Heart right ventricle (tissue), 16 donors: ENCODE measurements at regions of chr11 and their contacts with region 1.

Region 1: GRCh38 chr11:9302448-9302847 is 11.9 kb downstream of the TMEM41B start:
- DNase-seq: no peak
- ATAC-seq: no peak
- H3K4me3 ChIP-seq: no peak overlapping the region
- H3K27ac ChIP-seq: no peak overlapping the region
- H3K4me1 ChIP-seq: peaks cover 0 to 5% (median 0%) of the 10 kb centered on the region in 9 donors
- H3K27me3 ChIP-seq: no peaks in the 10 kb centered on the region
- CTCF ChIP-seq: no peak

Region 2: GRCh38 chr11:9169595-9170295 is 132.7 kb before region 1 on chr11:
- intact Hi-C with region 1: no loop called
- DNase-seq: no peak
- ATAC-seq: no peak
- H3K4me3 ChIP-seq: no peak overlapping the region
- H3K27ac ChIP-seq: no peak overlapping the region
- H3K4me1 ChIP-seq: peaks cover 0 to 20% (median 0%) of the 10 kb centered on the region in 9 donors
- H3K27me3 ChIP-seq: no peaks in the 10 kb centered on the region
- CTCF ChIP-seq: no peak

Region 3: DNA sequence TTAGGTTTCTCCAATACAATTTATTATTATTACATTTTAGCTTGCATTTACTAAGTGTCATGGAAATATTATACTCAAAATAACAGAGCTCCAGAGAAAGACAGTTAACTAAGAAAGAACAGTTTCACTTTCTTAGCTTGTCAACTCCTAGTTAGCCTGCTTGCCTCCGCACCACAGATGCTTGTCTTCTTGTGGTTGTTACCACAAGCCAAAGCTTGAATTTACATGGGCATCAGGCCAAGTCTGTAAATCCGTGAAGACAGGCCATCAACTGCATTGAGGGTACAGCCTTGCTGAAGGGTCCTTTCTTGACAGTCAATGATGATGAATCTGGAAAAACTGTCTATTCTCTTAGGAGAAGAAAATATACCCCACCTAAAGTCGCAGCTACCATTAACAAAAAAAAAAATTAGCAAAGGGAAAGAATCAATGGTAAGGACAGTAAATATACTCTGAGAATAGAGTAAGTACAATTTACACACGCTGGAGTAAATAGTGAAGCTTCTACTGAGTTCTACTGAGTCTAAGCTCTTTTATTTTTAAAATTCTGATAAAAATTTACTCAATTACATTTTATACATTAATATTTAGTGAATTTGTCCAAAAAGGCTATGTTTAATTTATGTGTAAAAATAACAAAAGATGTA is 21.7 kb before region 1 on chr11:
- intact Hi-C with region 1: loop called in 1 of 10 experiments (anchors 2 kb)
- DNase-seq: no peak
- ATAC-seq: peak in 2 of 8 donors; percentile 35 to 37
- H3K4me3 ChIP-seq: no peak overlapping the region
- H3K27ac ChIP-seq: peak overlapping the region in 5 of 10 donors; percentile 7 to 47 (median 22)
- H3K4me1 ChIP-seq: peaks cover 0 to 12% (median 4%) of the 10 kb centered on the region in 9 donors
- H3K27me3 ChIP-seq: no peaks in the 10 kb centered on the region
- CTCF ChIP-seq: no peak